ENCODE measurements at regions of chr20 and their contacts with region 1.

Region 1: DNA sequence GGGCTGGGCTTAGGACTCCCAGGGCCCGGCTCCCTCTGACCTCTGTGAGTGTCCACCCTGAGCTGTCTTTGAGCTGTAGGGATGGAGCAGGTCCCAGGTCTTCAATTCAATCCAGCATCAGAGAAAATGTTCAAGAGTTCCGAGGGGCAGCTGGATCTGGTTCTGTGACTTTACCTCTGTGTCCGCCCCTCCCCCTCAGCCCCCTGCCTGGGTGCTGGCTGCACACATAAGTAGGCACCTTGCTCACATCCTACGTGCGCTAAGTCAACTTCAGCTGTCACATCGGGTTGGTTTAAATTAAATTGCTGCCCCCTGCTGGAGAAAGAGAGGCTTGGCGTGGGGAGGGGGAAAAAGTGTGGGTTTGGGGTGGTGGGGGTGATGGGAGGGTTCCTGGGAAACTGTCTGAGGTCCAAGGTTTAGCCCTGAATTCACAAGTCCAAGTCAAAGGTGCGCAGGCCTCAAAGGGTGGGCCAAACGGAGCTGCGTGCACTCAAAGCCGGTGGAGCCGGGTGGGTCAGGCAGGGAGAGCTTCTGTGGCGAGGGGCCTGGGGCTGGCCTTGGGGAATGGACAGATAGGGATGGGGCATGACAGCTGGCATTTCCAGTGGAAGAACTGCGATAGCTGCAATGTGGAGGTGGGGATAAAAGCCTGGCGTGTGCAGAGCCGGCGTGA is 3.0 kb downstream of the WFDC5 start:
- DNase-seq: no peak
- H3K4me3 ChIP-seq: no peak overlapping the region
- H3K27me3 ChIP-seq: peaks cover 14% of the 10 kb centered on the region
- CTCF ChIP-seq: peak; percentile 62

Region 2: DNA sequence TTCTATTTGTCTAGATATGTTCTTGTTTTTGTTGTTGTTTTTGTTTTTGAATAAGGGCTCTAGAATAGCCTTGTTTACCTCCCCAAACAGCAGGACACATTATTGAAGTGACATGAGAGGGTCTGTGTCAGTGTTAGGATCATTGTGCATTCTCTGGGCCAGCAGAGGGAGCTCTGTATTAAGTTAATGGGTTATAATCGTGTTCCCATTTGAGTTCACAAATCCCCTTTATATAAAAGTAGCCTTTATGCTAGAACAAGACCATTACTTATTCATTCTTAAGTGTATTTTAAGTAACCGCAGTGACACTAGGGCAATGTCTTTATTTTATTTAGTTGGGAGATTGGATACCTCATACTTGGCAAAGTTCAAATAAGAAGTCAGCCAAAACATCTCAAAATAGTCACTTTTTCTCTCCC is 100.8 kb before region 1 on chr20:
- CTCF ChIA-PET with region 1: interaction called, 23 read pairs
- POLR2A ChIA-PET with region 1: no interaction called
- DNase-seq: no peak
- H3K4me3 ChIP-seq: no peak overlapping the region
- H3K27me3 ChIP-seq: no peaks in the 10 kb centered on the region
- CTCF ChIP-seq: peak; percentile 71

Region 3: DNA sequence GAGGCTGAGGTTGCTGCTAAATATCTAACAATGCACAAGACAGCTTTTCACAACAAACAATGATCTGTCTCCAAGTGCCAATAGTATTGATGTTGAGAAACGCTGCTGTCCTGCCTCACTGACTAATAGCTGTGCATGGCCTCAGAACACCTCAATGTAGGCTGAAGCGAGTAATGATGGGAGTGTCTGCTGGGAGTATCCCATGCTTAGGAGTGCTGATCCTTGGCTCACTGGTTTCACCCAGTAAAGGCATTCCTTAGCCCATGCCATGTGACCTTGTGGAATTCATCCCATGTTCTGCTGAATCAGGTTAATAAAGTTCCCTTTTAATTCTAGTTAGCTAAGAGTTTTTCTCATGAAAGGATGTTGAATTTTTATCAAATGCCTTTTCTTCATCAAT is 16.1 kb after region 1 on chr20:
- CTCF ChIA-PET with region 1: interaction called, 10 read pairs
- POLR2A ChIA-PET with region 1: no interaction called
- DNase-seq: no peak
- H3K4me3 ChIP-seq: no peak overlapping the region
- H3K27me3 ChIP-seq: peaks cover 7% of the 10 kb centered on the region
- CTCF ChIP-seq: no peak